ENCODE measurements at regions of chr18 and their contacts with region 1.

Region 1: DNA sequence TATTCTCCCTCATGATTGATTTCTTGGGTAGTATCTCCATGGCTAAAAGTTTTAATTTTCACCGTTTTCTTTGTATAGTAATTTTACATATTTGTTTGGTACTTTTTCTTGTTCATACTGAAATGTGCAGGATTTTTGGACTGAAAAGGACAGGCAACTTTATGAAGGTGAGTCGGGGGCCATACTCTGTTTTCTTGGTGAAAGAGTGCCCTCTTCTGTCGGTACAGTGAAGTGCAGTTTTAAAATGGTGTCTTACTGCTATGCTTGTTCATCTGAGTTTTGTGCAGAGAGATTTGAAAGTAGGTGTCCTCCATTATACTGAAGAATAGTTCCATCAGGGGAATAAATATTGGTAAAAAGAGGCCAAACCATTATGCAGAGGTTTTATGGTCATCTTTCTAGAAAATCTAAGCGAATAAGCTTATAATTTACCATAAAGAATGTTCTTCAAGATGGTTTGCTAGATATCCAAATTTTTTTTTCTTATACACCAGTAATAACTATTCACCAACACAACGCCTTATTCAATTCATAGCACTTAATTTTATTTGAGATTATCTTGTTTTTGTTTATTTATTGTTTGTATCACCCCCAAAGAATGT is 8.7 kb upstream of the SERPINB13 start:
- DNase-seq: peak; percentile 23
- ATAC-seq: peak; percentile 69
- H3K4me3 ChIP-seq: no peak overlapping the region
- H3K27ac ChIP-seq: no peak overlapping the region
- H3K4me1 ChIP-seq: no peaks in the 10 kb centered on the region
- H3K27me3 ChIP-seq: no peaks in the 10 kb centered on the region
- CTCF ChIP-seq: peak; percentile 78
- EP300 ChIP-seq: no peak
- POLR2A ChIP-seq: no peak
- RAD21 ChIP-seq: no peak

Region 2: DNA sequence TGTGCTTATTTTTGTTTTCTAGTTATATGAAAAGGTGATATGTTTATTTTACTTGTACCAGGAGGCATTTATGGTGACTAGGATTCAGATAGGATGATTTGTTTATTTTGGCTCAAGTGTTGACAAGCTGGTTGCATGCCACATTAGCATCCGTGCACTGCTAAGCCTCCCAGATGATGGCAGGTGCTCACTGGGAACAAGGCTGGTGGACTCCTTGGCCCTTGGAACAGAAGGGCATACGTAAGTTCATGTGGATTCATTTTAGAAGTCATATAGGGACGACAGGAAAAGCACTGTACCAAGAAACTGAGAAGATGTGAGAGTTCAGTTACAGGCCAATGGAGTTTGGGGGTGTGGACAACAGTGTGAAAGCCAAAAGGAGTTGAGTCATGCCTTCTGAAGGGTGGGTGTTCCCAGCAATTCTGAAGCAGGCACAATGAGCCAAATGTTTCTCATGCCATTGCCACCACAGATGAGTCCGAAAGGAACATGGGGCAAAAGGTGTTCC is 696.9 kb before region 1 on chr18:
- CTCF ChIA-PET with region 1: no interaction called
- POLR2A ChIA-PET with region 1: no interaction called
- in situ Hi-C with region 1: no loop called
- intact Hi-C with region 1: no loop called
- DNase-seq: no peak
- ATAC-seq: no peak
- H3K4me3 ChIP-seq: no peak overlapping the region
- H3K27ac ChIP-seq: no peak overlapping the region
- H3K4me1 ChIP-seq: peaks cover 9% of the 10 kb centered on the region
- H3K27me3 ChIP-seq: no peaks in the 10 kb centered on the region
- CTCF ChIP-seq: no peak
- EP300 ChIP-seq: no peak
- POLR2A ChIP-seq: no peak
- RAD21 ChIP-seq: no peak

Region 3: DNA sequence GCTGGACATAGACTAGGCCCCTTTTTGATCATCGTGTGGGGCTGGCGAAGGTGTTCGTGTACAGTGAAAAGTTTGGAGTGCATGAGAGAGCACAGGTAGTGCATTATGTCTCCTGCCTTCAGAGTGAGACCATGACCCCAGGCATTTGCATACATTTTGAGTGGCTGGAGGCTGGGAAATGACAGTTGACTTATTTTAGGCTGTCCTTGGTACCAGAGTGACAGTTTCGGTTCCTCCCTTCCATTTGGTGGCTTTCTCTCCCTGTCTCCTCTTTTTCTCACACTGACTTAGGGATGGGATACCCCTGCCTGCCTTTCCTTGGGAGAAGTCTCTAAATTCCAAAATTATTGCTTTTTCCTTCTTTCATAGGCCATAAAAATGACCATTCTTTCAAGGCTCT is 16.2 kb before region 1 on chr18:
- CTCF ChIA-PET with region 1: no interaction called
- POLR2A ChIA-PET with region 1: no interaction called
- in situ Hi-C with region 1: no loop called
- intact Hi-C with region 1: loop called (anchors 1 kb)
- DNase-seq: no peak
- ATAC-seq: no peak
- H3K4me3 ChIP-seq: no peak overlapping the region
- H3K27ac ChIP-seq: no peak overlapping the region
- H3K4me1 ChIP-seq: no peaks in the 10 kb centered on the region
- H3K27me3 ChIP-seq: no peaks in the 10 kb centered on the region
- CTCF ChIP-seq: no peak
- EP300 ChIP-seq: no peak
- POLR2A ChIP-seq: no peak
- RAD21 ChIP-seq: no peak

Measured in HepG2 (cell line).